Gastrocnemius medialis (tissue), 4 donors: ENCODE measurements at regions of chrX and their contacts with region 1.

Region 1: GRCh38 chrX:19904778-19905367 is 17.5 kb upstream of the SH3KBP1 start:
- DNase-seq: no peak
- ATAC-seq: peak; percentile 55 to 65
- H3K4me3 ChIP-seq: no peak overlapping the region
- H3K27ac ChIP-seq: no peak overlapping the region
- H3K4me1 ChIP-seq: no peaks in the 10 kb centered on the region
- H3K27me3 ChIP-seq: no peaks in the 10 kb centered on the region
- CTCF ChIP-seq: peak; percentile 15 to 60 (median 33)
- POLR2A ChIP-seq: no peak

Region 2: DNA sequence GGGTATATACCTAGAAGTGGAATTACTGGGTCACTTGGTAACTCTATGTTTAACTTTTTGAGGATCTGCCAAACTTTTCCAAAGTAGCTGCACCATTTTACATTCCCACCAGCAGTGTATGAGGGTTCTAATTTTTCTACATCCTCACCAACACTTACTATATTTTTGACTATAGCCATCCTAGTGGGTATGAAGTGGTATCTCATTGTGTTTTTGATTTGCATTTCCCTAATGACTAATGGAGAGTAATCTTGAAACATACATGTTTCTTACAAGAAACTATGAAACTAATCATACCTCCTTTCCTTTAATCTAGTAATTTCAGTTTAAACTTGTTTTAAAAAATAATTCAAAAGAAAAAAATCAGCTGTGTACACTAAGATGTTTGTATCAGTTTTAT is 68.1 kb after region 1 on chrX:
- in situ Hi-C with region 1: loop called in 1 of 4 experiments (anchors 10 kb)
- intact Hi-C with region 1: no loop called
- DNase-seq: no peak
- ATAC-seq: no peak
- H3K4me3 ChIP-seq: no peak overlapping the region
- H3K27ac ChIP-seq: no peak overlapping the region
- H3K4me1 ChIP-seq: no peaks in the 10 kb centered on the region
- H3K27me3 ChIP-seq: no peaks in the 10 kb centered on the region
- CTCF ChIP-seq: no peak
- POLR2A ChIP-seq: no peak

Region 3: DNA sequence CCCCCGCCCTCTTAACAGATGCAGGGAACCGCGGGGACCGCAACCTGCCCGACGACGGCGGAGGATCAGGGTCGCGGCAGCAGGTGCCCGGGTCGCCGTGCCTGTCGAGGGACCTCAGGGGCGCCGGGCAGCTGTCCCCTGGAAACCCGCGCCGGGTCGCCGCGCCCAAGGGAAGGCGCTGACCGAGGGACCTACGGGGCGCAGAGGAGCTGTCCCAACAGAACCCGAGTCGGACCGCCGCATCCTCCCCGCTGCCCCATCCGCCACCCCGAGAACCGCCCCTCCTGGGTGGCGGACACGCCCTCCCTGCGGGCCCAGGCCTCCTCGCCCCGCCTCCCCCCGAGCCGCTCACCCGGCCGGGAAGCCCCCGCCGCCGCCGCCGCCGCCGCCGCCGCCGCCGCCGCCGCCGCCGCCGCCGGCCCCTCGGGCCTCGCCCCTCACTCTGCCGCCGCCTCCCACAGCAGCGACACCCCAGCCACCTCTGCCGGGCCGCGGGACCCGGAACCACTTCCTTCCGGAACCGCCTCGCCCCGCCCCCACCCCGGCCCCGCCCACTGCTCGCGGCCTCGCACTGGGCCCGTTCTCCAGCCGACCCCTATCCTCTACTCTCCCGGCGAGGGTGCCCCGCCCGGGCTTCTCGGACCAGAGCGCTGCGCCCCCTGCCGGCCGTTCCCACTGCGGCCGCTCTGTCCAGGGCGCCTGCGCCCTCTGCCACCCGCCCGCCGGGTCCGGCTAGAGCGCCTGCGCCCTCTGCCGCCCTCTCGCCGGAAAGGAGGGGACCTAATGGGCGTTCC is 85.9 kb after region 1 on chrX and contains the start of gene BCLAF3:
- in situ Hi-C with region 1: no loop called
- intact Hi-C with region 1: loop called (anchors 1 kb)
- DNase-seq: peak; percentile 73 to 83
- ATAC-seq: peak; percentile 87 to 88
- H3K4me3 ChIP-seq: peak within 1 kb of the TSS; percentile 69 to 84 (median 74)
- H3K27ac ChIP-seq: peak within 1 kb of the TSS; percentile 79 to 83 (median 81)
- H3K4me1 ChIP-seq: peaks cover 0 to 11% of the 10 kb centered on the region in 2 donors
- H3K27me3 ChIP-seq: no peaks in the 10 kb centered on the region
- CTCF ChIP-seq: peak; percentile 56 to 84 (median 80)
- POLR2A ChIP-seq: peak in 1 of 2 donors; percentile 20
- total RNA-seq, gene BCLAF3: 2.4 to 4.2 (median 2.6) TPM

Region 4: GRCh38 chrX:20066968-20067708 is 162.3 kb after region 1 on chrX:
- in situ Hi-C with region 1: no loop called
- intact Hi-C with region 1: loop called (anchors 10 kb)
- DNase-seq: no peak
- ATAC-seq: peak in 1 of 2 donors; percentile 68
- H3K4me3 ChIP-seq: no peak overlapping the region
- H3K27ac ChIP-seq: no peak overlapping the region
- H3K4me1 ChIP-seq: no peaks in the 10 kb centered on the region
- H3K27me3 ChIP-seq: no peaks in the 10 kb centered on the region
- CTCF ChIP-seq: peak in 2 of 5 experiments; percentile 9 to 31
- POLR2A ChIP-seq: no peak

Region 5: DNA sequence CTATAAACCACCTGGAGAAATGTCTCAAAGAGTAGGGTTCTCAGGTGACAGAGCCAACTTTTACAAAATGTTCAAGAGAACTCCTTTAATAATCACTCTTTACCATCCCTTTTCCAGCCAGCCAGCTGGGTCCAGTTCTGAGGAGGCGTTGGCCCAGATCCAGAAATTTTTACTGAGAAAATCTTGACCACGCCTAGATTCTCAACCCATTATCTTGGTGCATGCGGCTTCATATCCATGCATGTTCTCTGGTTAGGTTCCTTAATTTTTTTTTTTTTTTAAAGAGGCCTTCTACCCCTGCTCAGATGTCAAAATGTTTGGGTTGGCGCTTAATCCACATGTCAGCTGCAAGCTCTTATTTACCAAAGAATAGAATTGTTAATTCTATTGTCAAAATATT is 223.8 kb after region 1 on chrX:
- in situ Hi-C with region 1: loop called in 2 of 4 experiments (anchors 10 kb)
- intact Hi-C with region 1: loop called (anchors 10 kb)
- DNase-seq: no peak
- ATAC-seq: no peak
- H3K4me3 ChIP-seq: no peak overlapping the region
- H3K27ac ChIP-seq: no peak overlapping the region
- H3K4me1 ChIP-seq: no peaks in the 10 kb centered on the region
- H3K27me3 ChIP-seq: no peaks in the 10 kb centered on the region
- CTCF ChIP-seq: no peak
- POLR2A ChIP-seq: no peak

Region 6: GRCh38 chrX:20320461-20321159 is 415.7 kb after region 1 on chrX:
- in situ Hi-C with region 1: no loop called
- intact Hi-C with region 1: no loop called
- DNase-seq: no peak
- ATAC-seq: no peak
- H3K4me3 ChIP-seq: no peak overlapping the region
- H3K27ac ChIP-seq: no peak overlapping the region
- H3K4me1 ChIP-seq: peaks cover 5 to 13% of the 10 kb centered on the region in 2 donors
- H3K27me3 ChIP-seq: no peaks in the 10 kb centered on the region
- CTCF ChIP-seq: no peak
- POLR2A ChIP-seq: no peak